Activated CD8-positive, alpha-beta T cell treated with anti-CD3 and anti-CD28 coated beads for 36 hours (primary cell): ENCODE measurements at regions of chr13 and their contacts with region 1.

Region 1: DNA sequence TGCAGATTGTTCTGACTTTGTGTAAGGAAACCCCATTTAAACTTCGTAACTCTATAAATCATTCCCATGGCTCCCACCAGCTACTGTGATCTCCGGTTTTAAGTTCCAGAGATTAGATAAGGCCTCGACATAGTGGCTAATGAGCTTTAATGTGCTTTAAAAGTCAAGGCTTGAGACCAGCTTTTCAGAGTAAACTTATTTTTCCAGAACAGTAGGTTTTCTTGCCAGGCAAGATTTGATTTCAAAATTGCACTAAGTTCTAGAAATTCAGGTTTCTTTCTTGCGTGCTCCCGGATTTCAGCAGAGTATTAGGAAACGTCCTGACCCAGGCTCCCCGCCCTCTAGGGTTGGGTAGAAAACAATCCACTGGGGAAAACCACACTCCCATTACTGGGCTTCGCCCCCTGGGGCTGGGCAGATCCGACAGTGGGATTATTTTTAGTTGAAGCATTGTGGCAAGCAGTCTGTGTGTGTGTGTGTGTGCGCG is 43.3 kb downstream of the CRYL1 start:
- DNase-seq: no peak
- ATAC-seq: no peak
- H3K4me3 Mint-ChIP-seq: no peak overlapping the region
- H3K27ac Mint-ChIP-seq: no peak overlapping the region
- H3K4me1 Mint-ChIP-seq: peaks cover 11% of the 10 kb centered on the region
- H3K27me3 Mint-ChIP-seq: no peaks in the 10 kb centered on the region
- CTCF ChIP-seq: no peak

Region 2: GRCh38 chr13:20024702-20025101 is 457.6 kb before region 1 on chr13:
- CTCF ChIA-PET with region 1: no interaction called
- POLR2A ChIA-PET with region 1: no interaction called
- intact Hi-C with region 1: no loop called
- DNase-seq: no peak
- ATAC-seq: no peak
- H3K4me3 Mint-ChIP-seq: no peak overlapping the region
- H3K27ac Mint-ChIP-seq: no peak overlapping the region
- H3K4me1 Mint-ChIP-seq: peaks cover 15% of the 10 kb centered on the region
- H3K27me3 Mint-ChIP-seq: no peaks in the 10 kb centered on the region
- CTCF ChIP-seq: no peak

Region 3: DNA sequence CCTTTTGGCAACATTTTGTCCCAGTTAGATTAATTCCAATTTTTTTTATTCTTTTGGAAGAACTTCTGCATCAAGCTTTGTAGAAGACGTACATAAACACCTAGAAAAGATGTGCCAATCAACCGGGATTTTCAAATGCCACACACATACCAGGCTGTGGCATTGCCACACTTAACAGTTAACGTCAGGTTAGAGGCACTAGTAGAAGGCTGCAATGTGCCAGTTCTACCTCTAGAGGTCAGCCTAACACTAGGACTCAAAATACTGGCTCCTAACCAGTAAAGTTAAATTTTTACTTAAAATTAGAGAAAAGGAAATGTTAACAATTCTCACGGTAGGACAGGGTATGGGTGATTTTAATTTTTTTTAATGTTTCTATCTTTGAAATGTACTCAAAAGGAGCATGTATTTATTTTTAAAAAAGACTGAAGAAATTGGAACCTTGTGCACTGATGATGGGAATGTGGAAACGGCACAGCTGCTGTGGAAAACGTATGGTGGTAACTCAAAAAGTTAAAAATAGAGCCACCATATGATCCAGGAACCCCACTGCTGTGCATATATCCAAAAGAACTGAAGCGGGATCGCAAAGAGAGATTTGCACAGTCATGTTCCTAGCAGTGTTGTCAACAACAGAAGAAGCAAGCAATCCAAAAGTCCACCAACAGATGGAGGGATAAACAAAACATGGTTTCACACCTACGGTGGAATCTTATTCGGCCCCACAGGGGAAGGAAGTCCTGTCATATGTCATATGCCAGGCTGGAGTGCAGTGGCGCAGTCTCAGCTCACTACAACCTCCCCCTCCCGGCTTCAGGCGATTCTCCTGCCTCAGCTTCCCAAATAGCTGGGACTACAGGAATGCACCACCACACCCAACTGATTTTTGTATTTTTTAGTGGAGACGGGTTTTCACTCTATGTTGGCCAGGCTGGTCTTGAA is 13.0 kb after region 1 on chr13:
- CTCF ChIA-PET with region 1: interaction called, 38 read pairs
- POLR2A ChIA-PET with region 1: no interaction called
- intact Hi-C with region 1: no loop called
- DNase-seq: peak; percentile 79
- ATAC-seq: peak; percentile 89
- H3K4me3 Mint-ChIP-seq: no peak overlapping the region
- H3K27ac Mint-ChIP-seq: no peak overlapping the region
- H3K4me1 Mint-ChIP-seq: peaks cover 2% of the 10 kb centered on the region
- H3K27me3 Mint-ChIP-seq: no peaks in the 10 kb centered on the region
- CTCF ChIP-seq: peak; percentile 96

Region 4: DNA sequence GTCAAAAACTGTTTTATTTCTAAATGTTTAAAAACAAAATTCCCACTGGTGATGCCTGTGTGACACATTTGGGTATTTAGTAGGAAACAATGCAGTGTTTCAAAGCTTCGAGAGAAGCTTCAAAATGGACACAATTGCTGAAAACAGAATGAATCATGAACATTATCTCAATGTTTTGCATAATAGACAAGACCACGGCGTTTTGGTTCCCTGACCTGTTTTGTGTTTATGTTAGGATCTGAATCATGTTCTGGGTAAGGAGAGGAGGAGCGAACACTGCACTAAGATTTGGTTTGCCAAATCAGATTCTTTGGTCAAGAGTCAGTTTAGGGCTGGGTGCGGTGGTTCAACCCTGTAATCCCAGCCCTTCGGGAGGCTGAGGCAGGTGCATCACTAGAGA is 126.8 kb after region 1 on chr13:
- CTCF ChIA-PET with region 1: no interaction called
- POLR2A ChIA-PET with region 1: no interaction called
- intact Hi-C with region 1: no loop called
- DNase-seq: no peak
- ATAC-seq: no peak
- H3K4me3 Mint-ChIP-seq: no peak overlapping the region
- H3K27ac Mint-ChIP-seq: no peak overlapping the region
- H3K4me1 Mint-ChIP-seq: no peaks in the 10 kb centered on the region
- H3K27me3 Mint-ChIP-seq: no peaks in the 10 kb centered on the region
- CTCF ChIP-seq: no peak